Activated CD8-positive, alpha-beta T cell treated with anti-CD3 and anti-CD28 coated beads for 36 hours (primary cell): ENCODE measurements at regions of chr9 and their contacts with region 1.

Region 1: GRCh38 chr9:91207729-91208418 is 153.8 kb downstream of the AUH start:
- DNase-seq: peak; percentile 55
- ATAC-seq: peak; percentile 76
- H3K4me3 Mint-ChIP-seq: peak overlapping the region; percentile 35
- H3K27ac Mint-ChIP-seq: peak overlapping the region; percentile 98
- H3K4me1 Mint-ChIP-seq: peaks cover 69% of the 10 kb centered on the region
- H3K27me3 Mint-ChIP-seq: no peaks in the 10 kb centered on the region
- CTCF ChIP-seq: no peak

Region 2: DNA sequence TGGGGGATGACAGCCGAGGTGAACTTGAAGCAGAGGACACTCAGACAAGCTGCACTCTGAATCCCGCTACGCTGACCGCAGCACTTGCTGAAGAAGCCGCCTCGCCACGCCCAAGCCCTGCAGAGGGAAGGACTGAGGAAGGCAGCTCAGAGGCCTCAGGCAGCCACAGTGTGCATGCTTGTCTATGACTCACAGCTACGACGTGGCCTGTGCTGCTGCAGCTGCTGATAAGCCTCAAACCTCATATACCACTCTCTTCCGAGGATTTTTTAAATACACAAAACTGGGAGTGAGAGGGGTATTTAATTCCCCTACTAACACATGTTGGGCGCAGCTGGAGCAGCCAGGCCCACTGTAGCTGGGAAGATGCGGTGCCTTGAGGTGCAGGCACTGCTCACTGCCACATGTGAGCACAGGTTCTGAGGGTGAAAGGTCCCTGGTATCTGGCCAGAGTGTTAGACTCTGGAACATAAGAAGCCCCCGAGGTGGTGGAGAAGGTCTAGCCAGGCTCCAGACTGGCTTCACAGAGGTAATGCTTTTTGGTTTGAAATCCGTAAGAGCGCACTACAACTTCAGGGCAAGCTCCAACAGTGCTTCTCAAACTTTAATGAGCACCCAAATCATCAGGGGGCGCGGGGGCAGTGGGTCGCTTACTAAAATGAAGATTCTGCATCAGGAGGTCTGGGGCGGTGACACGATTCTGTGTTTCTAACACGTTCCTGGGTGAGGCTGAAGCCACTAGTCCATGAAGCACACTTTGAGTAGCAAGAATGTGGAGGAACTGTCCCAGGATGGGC is 43.0 kb before region 1 on chr9:
- CTCF ChIA-PET with region 1: interaction called, 3 read pairs
- POLR2A ChIA-PET with region 1: interaction called, 11 read pairs
- intact Hi-C with region 1: loop called (anchors 5 kb)
- DNase-seq: peak; percentile 94
- ATAC-seq: peak; percentile 79
- H3K4me3 Mint-ChIP-seq: peak overlapping the region; percentile 71
- H3K27ac Mint-ChIP-seq: peak overlapping the region; percentile 96
- H3K4me1 Mint-ChIP-seq: peaks cover 61% of the 10 kb centered on the region
- H3K27me3 Mint-ChIP-seq: no peaks in the 10 kb centered on the region
- CTCF ChIP-seq: no peak

Region 3: GRCh38 chr9:91177661-91178280 is 30.1 kb before region 1 on chr9:
- CTCF ChIA-PET with region 1: interaction called, 3 read pairs
- POLR2A ChIA-PET with region 1: interaction called, 12 read pairs
- intact Hi-C with region 1: no loop called
- DNase-seq: peak; percentile 77
- ATAC-seq: peak; percentile 66
- H3K4me3 Mint-ChIP-seq: peak overlapping the region; percentile 51
- H3K27ac Mint-ChIP-seq: peak overlapping the region; percentile 95
- H3K4me1 Mint-ChIP-seq: peaks cover 58% of the 10 kb centered on the region
- H3K27me3 Mint-ChIP-seq: no peaks in the 10 kb centered on the region
- CTCF ChIP-seq: no peak

Region 4: DNA sequence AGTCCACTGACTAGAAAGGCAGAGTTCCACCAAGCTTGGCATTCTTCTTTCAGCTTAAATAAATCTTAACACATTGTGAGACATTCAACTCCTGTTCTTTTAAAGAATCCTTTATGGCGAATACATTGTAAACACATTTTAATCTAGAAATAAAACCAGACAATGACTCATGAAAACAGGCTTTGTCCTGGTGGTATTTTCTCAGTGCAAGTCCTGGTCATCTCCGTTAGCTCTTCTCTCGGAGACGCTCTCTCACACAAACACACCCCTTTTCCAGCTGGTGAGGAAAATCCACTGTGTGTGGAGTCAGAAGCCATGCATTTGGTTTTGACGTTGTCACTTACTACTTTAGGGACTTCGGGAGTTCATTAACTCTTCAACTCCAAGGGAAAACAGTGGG is 13.5 kb after region 1 on chr9:
- CTCF ChIA-PET with region 1: no interaction called
- POLR2A ChIA-PET with region 1: no interaction called
- intact Hi-C with region 1: no loop called
- DNase-seq: no peak
- ATAC-seq: no peak
- H3K4me3 Mint-ChIP-seq: no peak overlapping the region
- H3K27ac Mint-ChIP-seq: no peak overlapping the region
- H3K4me1 Mint-ChIP-seq: peaks cover 22% of the 10 kb centered on the region
- H3K27me3 Mint-ChIP-seq: no peaks in the 10 kb centered on the region
- CTCF ChIP-seq: no peak